PC-3 (cell line): ENCODE measurements at regions of chr1 and their contacts with region 1.

Region 1: GRCh38 chr1:154220071-154220969 is at the start of gene UBAP2L:
- DNase-seq: peak; percentile 100
- ATAC-seq: peak; percentile 94
- H3K4me3 ChIP-seq: peak within 1 kb of the TSS; percentile 84
- H3K27ac ChIP-seq: peak within 1 kb of the TSS; percentile 92
- H3K4me1 ChIP-seq: peaks cover 41% of the 10 kb centered on the region
- H3K27me3 ChIP-seq: no peaks in the 10 kb centered on the region
- CTCF ChIP-seq: no peak
- total RNA-seq, gene UBAP2L: 128 and 193 TPM in 2 replicates

Region 2: DNA sequence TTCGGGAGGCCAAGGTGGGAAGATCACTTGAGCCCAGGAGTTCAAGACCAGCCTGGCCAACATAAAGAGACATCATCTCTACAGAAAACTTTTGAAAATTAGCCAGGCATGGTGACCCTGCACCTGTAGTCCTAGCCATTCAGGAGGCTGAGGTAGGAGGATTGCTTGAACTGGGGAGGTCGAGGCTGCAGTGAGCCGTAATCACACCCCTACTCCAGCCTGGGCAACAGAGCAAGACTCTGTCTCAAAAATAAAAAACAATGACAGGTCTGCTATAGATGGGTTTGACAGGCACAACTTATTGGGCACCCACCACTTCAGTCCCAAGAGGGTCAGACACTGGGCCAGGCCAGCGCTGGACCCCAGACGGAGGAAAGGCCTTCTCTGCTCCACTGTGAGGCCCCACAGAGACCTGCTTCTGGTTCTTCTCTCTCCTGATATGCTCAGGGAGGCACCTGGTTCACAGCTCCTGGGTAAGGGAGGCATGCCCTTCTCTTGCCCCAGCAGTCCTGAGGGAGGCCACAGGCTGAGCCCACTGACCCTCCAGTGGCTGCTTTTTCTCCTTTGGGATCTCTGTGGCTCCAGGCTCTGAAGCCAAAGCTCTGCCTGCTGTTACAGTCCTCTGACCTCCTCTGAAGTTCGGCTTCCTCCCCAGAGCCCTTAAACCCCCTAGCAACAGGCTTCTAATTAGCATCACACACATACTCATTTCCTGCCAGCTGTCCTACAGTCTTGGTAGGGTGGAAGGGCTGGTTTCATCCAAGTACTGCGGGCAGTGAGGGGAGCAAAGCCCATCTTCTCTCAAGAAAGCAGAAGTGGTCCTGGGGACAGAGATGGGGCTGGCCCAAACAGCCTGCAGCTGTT is 621.8 kb before region 1 on chr1:
- CTCF ChIA-PET with region 1: no interaction called
- POLR2A ChIA-PET with region 1: no interaction called
- intact Hi-C with region 1: no loop called
- DNase-seq: no peak
- ATAC-seq: peak; percentile 26
- H3K4me3 ChIP-seq: no peak overlapping the region
- H3K27ac ChIP-seq: no peak overlapping the region
- H3K4me1 ChIP-seq: no peaks in the 10 kb centered on the region
- H3K27me3 ChIP-seq: no peaks in the 10 kb centered on the region
- CTCF ChIP-seq: no peak

Region 3: DNA sequence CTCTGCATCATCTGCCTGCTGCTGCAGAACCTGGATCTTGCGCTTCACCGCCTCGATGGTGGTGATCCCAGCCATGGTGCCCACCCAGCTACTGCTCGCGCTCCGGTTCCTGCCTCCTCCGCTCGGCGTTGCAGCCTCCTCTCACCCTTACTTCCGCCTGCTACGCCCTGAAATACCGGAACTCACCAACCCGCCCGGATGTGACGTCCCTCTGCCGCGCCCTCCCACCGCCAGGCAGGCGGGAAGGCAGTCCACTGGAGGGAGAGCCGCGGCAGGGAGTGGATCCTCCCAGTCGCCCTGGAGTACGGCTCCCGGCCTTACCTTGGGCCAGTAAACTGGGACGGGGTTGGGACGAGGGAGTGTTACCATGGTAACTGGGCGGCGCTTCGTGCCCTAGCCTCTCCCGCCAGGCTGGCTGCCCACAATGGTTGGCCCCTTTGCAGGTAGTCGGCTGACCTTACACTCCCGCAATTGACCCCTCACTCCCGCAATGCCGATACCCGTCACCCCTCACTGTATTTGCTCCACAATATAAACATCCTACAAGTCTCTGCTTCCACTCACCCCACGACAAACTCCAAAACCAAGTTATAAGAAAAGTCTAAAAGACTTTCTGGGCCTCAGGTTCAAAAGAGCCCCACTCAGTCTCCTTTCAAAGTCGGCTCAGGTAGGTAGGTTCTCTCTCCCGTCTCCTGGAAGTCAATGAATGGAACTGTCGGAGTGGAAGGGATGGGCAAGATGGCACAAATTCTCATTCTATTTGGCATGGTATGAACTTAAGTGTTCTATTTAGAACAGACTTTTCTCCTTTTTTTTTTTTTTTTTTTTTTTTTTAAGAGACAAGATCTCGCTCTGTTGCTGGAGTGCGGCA is 37.0 kb before region 1 on chr1:
- CTCF ChIA-PET with region 1: no interaction called
- POLR2A ChIA-PET with region 1: no interaction called
- intact Hi-C with region 1: loop called (anchors 1 kb)
- DNase-seq: peak; percentile 99
- ATAC-seq: peak; percentile 95
- H3K4me3 ChIP-seq: peak overlapping the region; percentile 80
- H3K27ac ChIP-seq: peak overlapping the region; percentile 83
- H3K4me1 ChIP-seq: peaks cover 35% of the 10 kb centered on the region
- H3K27me3 ChIP-seq: no peaks in the 10 kb centered on the region
- CTCF ChIP-seq: no peak

Region 4: DNA sequence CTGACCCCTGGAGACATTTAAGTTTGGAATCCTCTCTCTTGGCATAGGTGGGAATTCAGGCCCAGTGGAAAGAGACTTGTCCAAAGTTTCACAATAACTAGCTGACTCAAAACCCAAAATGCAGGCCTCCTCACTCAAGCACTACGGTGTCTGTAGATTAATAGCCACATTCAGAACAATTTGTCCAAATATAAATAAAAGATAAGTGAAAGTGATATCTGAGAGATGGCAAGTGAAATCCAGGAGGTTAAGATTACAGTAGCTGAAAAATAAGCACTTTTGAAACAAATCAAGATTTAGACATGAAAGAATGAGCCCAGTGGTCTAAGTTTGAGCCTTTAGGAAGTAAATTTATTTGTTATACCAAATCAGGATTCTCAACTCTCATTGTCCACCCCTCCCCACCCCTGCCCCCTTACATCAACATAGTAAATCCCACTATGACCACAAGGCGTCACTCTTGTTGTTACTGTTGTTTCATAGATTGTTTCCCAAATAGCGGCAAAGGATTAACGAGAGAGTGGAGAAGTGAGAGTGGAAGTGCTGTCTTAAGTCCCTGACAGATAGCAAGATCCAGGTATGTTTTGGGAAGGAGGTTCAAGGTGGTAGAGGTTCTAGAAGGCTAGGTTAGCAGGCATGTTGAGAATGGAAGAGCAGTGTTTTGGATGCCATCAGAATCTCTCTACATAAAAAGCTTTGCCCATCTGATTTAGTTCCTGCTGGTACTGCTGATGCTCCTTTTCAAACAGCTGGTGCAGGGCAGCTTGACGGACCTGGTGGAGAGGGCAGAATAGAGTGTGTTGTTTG is 21.4 kb before region 1 on chr1:
- CTCF ChIA-PET with region 1: interaction called, 4 read pairs
- POLR2A ChIA-PET with region 1: interaction called, 3 read pairs
- intact Hi-C with region 1: loop called (anchors 1 kb)
- DNase-seq: peak; percentile 84
- ATAC-seq: peak; percentile 84
- H3K4me3 ChIP-seq: peak overlapping the region; percentile 29; the same call in 1 of the 2 replicates
- H3K27ac ChIP-seq: no peak overlapping the region
- H3K4me1 ChIP-seq: peaks cover 10% of the 10 kb centered on the region; the same call in 1 of the 2 replicates
- H3K27me3 ChIP-seq: peaks cover 5% of the 10 kb centered on the region; the same call in 1 of the 2 replicates
- CTCF ChIP-seq: peak; percentile 84

Region 5: GRCh38 chr1:154831462-154831861 is 611.1 kb after region 1 on chr1:
- CTCF ChIA-PET with region 1: no interaction called
- POLR2A ChIA-PET with region 1: no interaction called
- intact Hi-C with region 1: no loop called
- DNase-seq: no peak
- ATAC-seq: no peak
- H3K4me3 ChIP-seq: no peak overlapping the region
- H3K27ac ChIP-seq: no peak overlapping the region
- H3K4me1 ChIP-seq: no peaks in the 10 kb centered on the region
- H3K27me3 ChIP-seq: peaks cover 95% of the 10 kb centered on the region
- CTCF ChIP-seq: no peak